Right ventricle myocardium superior (tissue), 1 donor: ENCODE measurements at regions of chr17 and their contacts with region 1.

Region 1: GRCh38 chr17:65100316-65101140 is 36.6 kb upstream of the RGS9 start:
- DNase-seq: peak; percentile 94
- ATAC-seq: peak; percentile 97

Region 2: GRCh38 chr17:64728041-64728751 is 372.3 kb before region 1 on chr17:
- intact Hi-C with region 1: no loop called
- DNase-seq: peak; percentile 55
- ATAC-seq: peak; percentile 36

Region 3: GRCh38 chr17:64968652-64969501 is 131.7 kb before region 1 on chr17:
- intact Hi-C with region 1: loop called (anchors 10 kb)
- DNase-seq: no peak
- ATAC-seq: no peak

Region 4: DNA sequence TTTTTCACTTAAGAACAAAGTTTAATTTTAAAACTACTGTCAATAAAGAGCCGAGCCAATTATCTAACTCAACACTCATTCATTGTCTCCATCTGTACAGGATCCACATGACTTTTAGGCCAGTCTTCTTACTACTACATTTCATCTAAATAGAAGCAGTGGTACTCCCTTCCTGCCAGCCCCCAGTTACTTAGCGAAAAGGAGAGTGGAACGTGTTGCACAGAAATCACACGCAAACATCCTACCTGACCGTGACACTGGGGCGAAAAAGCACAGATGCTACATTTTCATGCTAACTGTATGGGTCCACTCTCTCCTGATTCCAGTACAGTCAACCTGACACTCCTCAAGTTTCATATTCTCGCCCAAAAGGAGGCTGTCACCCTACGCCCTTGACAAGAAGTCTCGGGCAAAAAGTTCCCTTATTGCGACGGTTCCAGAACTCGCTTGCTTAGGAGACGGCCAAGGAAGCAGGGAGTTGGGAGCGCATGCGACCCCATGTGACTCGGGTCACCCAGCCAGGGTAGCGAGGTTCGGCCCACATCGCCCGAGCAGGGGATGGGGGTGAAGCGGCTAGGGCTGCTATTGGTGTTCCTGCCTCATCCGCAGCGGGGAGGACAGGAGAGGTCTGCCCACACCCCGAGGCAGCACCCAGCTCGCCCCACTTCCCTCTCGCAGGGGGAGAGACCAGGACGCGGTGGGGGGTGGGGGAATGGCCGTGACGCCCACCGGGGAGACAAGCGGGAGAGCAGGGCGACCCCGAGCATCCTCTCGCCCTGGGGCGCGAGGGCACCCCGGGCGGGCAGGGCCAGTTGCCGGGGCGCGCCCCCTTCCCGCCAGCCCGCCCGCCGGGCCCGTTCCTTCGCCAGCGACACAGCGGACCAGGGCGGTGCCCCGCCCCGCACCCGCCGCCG is 44.9 kb before region 1 on chr17:
- intact Hi-C with region 1: loop called (anchors 5 kb)
- DNase-seq: peak; percentile 79
- ATAC-seq: peak; percentile 45